MCF 10A (cell line): ENCODE measurements at regions of chr5 and their contacts with region 1.

Region 1: GRCh38 chr5:26482810-26483375 is 555.5 kb downstream of the CDH9 start:
- DNase-seq: peak; percentile 64
- H3K4me3 Mint-ChIP-seq: peak overlapping the region; percentile 29
- H3K27ac Mint-ChIP-seq: no peak overlapping the region
- H3K4me1 Mint-ChIP-seq: no peaks in the 10 kb centered on the region
- H3K27me3 Mint-ChIP-seq: no peaks in the 10 kb centered on the region
- CTCF ChIP-seq: peak; percentile 58

Region 2: DNA sequence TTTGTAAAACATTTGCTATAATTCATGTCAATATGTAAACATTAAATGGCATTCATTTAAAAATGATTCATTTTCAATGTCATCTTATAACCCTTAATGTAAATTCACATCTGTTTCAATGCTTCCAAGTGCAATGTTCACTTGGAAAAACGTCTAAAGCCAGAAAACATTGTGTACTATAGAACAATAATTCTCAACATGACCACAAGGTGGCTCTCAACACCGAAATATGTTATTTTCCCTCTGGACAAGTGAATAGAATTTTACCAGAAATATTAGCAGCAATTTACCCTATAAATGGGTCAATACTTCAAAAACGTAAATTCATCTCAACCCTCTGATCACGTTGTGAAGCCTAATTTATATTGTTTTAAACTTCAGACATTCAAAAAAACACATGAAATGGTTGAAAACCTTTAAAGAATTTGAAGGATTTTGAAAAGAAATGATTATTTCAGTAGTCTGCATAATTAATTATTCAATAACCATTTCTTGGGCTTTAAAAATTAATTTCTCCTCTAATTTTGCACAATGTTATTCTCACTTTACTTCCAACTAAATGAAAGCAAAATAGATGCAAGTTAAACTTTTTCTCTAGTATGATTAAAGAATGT is 1849.1 kb before region 1 on chr5:
- CTCF ChIA-PET with region 1: no interaction called
- POLR2A ChIA-PET with region 1: no interaction called
- intact Hi-C with region 1: loop called (anchors 2 kb)
- DNase-seq: peak; percentile 66
- H3K4me3 Mint-ChIP-seq: no peak overlapping the region
- H3K27ac Mint-ChIP-seq: no peak overlapping the region
- H3K4me1 Mint-ChIP-seq: no peaks in the 10 kb centered on the region
- H3K27me3 Mint-ChIP-seq: no peaks in the 10 kb centered on the region
- CTCF ChIP-seq: peak; percentile 57

Region 3: DNA sequence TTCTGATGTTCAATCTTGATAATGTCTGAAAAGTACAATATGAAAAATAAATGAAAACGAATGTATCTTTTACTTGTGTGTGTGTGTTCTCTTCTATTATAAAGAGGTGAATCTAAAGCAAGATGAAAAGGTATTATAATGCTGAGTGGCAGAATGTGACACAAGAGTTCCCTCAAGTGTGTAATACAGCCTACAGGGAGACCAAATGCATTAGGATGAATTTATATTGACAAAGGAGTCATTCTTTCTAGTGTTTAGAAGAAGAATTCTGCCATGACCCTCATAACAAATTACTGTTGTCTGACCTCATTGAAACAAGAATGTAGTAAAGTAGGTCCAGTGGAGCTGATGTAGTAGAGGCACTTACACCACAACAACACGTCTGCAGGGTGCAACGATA is 719.1 kb before region 1 on chr5:
- CTCF ChIA-PET with region 1: interaction called, 4 read pairs
- POLR2A ChIA-PET with region 1: no interaction called
- intact Hi-C with region 1: loop called (anchors 2 kb)
- DNase-seq: no peak
- H3K4me3 Mint-ChIP-seq: no peak overlapping the region
- H3K27ac Mint-ChIP-seq: no peak overlapping the region
- H3K4me1 Mint-ChIP-seq: no peaks in the 10 kb centered on the region
- H3K27me3 Mint-ChIP-seq: no peaks in the 10 kb centered on the region
- CTCF ChIP-seq: no peak